GM10248 (cell line): ENCODE measurements at regions of chr15 and their contacts with region 1.

Region 1: GRCh38 chr15:89101302-89102191 is 13.3 kb downstream of the ABHD2 start:
- DNase-seq: peak; percentile 19
- CTCF ChIP-seq: no peak

Region 2: DNA sequence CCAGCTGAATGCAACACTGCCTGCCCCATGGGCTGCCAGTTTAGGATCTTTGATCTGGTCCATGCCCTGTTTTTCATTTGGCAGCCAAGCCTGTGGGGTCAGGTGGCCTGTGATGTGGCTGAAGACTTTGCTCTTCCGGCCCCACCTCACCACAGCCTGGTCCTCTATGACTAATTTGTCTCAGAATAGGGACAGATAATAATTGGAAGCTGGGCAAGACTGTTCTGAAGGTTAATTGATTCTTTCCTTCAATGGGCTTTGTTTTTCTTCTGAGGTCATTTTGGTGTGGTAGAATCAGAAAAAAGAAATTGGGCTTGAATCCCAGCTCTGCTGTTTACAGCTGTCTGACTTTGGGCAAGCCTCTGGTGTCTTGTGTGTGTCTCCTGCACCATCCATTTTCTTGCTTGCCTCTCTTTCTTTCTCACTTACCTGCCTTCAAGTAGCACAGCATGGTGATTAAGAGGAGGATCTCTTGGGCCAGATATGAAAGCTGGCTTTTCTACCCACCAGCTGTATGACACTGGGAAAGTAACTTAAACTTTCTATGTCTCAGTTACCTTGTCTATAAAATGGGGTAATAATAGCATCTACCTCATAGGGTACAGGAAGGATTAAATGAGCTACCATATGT is 10.9 kb after region 1 on chr15:
- CTCF ChIA-PET with region 1: interaction called, 26 read pairs
- POLR2A ChIA-PET with region 1: no interaction called
- DNase-seq: peak; percentile 60
- CTCF ChIP-seq: no peak